Activated T-helper 2 cell treated with anti-CD3 and anti-CD28 coated beads, Interferon-gamma antibody, Interleukin-2, Interleukin-4, amounts not matched to agents 10 μg/mL and 5 μg/mL and 100 μg/mL, durations not matched to agents 14 hours and 24 hours and 36 hours (primary cell): ENCODE measurements at regions of chr19 and their contacts with region 1.

Region 1: DNA sequence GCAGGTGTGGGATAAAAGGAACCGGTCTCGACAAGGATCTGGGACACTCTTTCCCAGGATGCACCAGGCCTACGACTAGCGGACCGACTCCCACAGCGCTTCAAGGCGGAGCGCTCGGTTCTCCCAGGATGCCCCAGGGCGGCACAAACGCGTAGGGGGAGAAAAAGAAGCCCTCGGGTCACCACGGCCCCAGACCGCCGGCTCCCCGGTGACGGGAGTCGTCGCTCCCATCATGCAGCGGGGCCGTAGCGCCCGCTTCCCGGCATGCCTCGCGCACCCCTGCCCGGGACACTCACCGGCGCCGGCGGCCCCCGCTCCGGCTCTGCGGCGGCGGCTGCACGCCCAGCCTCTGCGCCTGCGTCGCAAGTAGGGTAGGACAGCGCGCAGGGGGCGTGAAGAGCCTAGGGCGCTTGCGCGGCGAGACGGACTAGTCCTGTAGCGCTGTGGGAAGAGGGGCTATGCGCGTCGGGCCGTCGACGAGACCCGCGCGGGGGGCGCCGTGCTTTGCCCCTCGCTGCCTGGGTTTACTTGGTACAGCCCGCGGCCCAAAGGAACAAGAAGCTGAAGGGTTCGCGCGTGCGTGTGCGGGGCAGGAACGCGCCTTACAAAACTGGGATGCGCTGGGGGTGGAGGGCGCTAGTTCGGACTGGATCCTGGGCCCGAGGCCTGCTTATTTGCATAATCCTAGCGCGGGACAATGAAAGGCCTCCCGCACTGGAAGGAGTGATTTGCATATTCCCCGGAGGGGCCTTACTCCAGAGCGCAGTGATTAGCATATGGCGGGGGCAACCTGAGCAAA is at the start of gene ZNF428:
- DNase-seq: peak; percentile 86
- H3K4me3 Mint-ChIP-seq: peak within 1 kb of the TSS; percentile 90
- H3K27ac Mint-ChIP-seq: peak within 1 kb of the TSS; percentile 96
- H3K4me1 Mint-ChIP-seq: peaks cover 18% of the 10 kb centered on the region
- H3K27me3 Mint-ChIP-seq: no peaks in the 10 kb centered on the region
- total RNA-seq, gene ZNF428: 17.7 and 19.1 TPM in 2 replicates

Region 2: GRCh38 chr19:43575156-43575950 is 44.1 kb before region 1 on chr19 and contains the starts of genes PINLYP and XRCC1:
- intact Hi-C with region 1: loop called (anchors 1 kb)
- DNase-seq: peak; percentile 95
- H3K4me3 Mint-ChIP-seq: peak within 1 kb of the TSS; percentile 97
- H3K27ac Mint-ChIP-seq: peak within 1 kb of the TSS; percentile 90
- H3K4me1 Mint-ChIP-seq: peaks cover 28% of the 10 kb centered on the region
- H3K27me3 Mint-ChIP-seq: no peaks in the 10 kb centered on the region
- total RNA-seq, gene PINLYP: 9.0 and 9.1 TPM in 2 replicates
- total RNA-seq, gene XRCC1: 27.3 and 27.5 TPM in 2 replicates

Region 3: DNA sequence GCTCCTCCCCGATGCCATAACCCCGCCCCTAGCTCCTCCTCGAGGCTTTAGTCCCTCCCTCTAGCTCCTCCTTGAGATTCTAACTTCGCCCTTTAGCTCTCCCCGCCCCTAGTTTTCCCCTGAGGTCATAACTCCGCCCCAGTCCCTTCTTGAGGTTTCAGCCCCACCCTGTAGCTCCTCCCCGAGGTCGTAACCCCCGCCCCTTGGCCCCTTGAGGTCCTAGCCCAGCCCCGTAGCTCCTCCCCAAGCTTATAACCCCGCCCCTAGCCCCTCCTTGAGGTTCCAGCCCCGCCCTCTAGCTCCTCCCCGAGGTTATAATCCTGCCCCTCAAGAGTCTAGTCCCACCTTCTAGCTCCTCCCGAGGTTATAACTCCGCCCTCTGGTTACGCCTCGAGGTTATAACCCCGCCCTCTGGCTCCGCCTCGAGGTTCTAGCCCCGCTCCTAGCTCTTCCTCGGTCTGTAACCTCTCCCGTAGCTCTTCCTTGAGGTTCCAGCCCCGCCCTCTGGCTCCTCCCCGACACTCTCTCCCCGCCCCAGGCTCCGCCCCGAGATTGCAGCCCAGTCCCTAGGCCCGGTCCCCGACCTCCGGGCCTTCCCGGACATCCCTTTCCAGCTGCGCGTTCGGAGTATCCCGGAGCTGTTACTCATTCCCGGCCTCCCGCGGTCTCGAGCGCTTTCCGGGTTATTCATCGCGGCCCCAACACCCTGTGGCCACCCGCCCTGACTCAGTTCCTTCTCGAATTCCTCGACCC is 49.1 kb after region 1 on chr19:
- intact Hi-C with region 1: no loop called
- DNase-seq: peak; percentile 94
- H3K4me3 Mint-ChIP-seq: peak overlapping the region; percentile 89
- H3K27ac Mint-ChIP-seq: peak overlapping the region; percentile 74
- H3K4me1 Mint-ChIP-seq: peaks cover 30% of the 10 kb centered on the region
- H3K27me3 Mint-ChIP-seq: peaks cover 9% of the 10 kb centered on the region

Region 4: DNA sequence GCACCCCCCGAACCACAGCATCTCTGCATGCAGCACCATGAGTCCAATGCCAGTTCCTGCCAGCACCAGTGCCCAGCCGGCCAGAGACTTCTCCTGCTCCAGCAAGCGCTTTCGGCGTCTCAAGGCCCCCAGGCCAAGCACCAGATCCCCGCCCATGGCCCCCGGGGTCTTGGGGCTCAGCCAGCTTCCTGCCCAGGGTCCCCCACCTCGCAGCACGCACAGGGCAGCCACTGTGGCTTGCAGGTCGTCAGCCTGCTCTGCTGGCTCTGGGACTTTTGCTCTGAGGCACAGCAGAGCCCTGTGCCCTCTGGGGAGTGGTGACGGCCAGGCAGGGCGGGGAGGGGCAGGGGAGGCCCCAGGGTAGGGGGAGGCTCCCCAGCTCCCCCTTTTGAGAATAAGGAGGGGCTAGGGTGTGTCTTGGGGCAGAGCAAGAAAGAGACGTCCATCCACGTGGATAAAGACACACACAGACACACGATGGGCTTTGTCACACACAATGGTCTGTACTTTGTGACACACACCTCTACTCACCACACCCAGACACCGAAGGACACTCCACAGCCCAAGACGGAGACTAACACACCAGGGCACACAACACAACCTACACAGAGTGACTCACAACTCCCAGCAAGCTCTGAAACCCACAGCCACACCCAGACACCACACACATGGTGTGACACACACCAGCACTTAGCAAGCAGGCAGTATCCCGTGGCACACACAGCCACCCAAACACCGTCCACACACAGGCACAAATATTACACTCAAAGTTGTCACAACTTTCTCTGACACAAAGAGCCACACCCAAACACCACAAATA is 161.5 kb after region 1 on chr19 and contains the start of gene KCNN4:
- intact Hi-C with region 1: no loop called
- DNase-seq: peak; percentile 61
- H3K4me3 Mint-ChIP-seq: peak within 1 kb of the TSS; percentile 82
- H3K27ac Mint-ChIP-seq: peak within 1 kb of the TSS; percentile 94
- H3K4me1 Mint-ChIP-seq: peaks cover 75% of the 10 kb centered on the region
- H3K27me3 Mint-ChIP-seq: no peaks in the 10 kb centered on the region
- total RNA-seq, gene KCNN4: 98.0 and 98.7 TPM in 2 replicates